ENCODE measurements at regions of chr19 and their contacts with region 1.

Region 1: DNA sequence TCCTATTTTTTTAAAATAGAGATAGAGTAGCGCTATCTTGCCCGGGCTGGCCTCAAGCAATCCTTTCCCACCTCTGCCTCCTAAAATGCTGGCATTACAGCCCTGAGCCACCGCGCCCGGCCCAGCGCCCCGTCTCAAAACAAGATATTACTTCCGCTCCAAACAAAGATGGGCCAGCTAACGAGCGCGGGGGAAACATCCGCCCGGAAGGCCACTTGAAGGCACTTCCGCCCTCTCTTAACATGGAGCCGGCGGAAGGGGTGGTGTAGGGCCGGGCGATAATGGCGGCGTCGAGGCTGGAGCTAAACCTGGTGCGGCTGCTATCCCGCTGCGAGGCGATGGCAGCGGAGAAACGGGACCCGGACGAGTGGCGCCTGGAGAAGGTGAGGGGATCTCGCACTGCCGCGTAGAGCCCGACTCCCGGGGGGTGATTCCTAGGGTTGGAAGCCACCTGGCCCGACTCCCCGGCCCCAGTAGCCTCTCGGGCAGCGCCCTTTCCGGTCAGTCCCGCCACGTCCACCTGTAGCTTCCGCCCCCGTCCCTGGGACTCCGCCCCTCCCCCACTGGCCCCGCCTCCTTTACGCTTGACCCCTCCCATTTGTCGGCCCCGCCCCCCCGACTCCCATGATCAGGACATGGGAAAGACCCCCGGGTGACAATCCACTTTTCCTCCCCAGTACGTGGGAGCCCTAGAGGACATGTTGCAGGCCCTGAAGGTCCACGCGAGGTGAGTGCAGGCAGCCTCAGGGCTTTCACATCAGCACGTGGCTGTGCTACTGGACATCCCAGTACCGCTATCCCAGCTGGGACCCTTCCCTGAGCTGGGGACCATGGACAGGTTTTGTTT is at the start of gene USE1:
- DNase-seq: peak; percentile 74
- H3K4me3 ChIP-seq: peak within 1 kb of the TSS; percentile 79
- H3K27ac ChIP-seq: peak within 1 kb of the TSS; percentile 93
- H3K27me3 ChIP-seq: no peaks in the 10 kb centered on the region
- CTCF ChIP-seq: no peak
- polyA plus RNA-seq, gene USE1: 21.1 and 25.1 TPM in 2 replicates

Region 2: GRCh38 chr19:17107525-17108452 is 107.6 kb before region 1 on chr19:
- CTCF ChIA-PET with region 1: no interaction called
- POLR2A ChIA-PET with region 1: no interaction called
- DNase-seq: peak; percentile 83
- H3K4me3 ChIP-seq: peak overlapping the region; percentile 15; the same call in 1 of the 2 replicates
- H3K27ac ChIP-seq: peak overlapping the region; percentile 90
- H3K27me3 ChIP-seq: no peaks in the 10 kb centered on the region
- CTCF ChIP-seq: no peak

Region 3: DNA sequence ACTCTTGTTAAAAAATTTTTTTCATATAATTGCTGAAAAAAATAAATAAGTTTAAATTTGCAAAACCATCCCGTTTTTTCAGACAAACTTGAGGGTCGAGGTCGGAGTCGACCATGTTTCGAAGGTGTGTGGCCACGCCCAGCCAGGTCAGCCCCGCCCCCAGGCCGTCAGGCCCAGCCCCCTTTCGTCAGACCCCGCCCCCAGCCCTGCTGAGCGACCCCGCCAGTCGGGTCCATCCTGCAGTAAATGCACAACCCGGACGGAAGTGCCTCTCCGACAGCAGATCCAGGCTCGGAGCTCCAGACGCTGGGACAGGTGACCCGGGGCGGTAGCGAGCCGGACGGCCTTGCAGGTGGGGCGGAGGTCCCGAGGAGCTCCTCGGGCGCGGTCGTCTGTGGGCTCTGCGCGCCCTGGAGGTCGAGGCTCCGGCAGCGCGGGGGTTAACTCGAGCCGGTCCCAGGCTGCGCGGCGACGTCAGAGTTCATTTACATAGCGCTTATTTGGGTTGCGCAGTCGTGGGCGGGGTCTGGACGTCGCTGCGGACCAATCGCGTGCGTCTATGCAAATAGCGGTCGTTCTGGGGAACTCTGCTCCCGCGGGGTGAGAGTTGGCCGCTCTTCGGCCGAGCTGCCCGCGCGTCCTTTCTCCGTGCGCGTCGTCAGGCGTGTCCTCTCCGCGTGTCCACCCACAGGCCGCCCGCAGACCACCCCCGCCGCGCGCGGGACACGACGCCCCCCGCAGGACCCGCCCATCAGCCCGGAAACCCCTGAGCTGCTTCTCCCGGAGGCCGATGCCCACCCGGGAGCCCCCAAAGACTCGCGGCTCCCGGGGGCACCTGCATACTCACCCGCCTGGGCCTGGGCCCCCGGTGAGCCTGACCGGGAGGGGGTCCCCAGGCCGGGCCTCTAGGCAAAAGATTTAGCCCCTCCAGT is 10.9 kb after region 1 on chr19 and contains the start of gene OCEL1:
- CTCF ChIA-PET with region 1: no interaction called
- POLR2A ChIA-PET with region 1: interaction called, 10 read pairs
- DNase-seq: peak; percentile 92
- H3K4me3 ChIP-seq: peak within 1 kb of the TSS; percentile 82
- H3K27ac ChIP-seq: peak within 1 kb of the TSS; percentile 47
- H3K27me3 ChIP-seq: no peaks in the 10 kb centered on the region
- CTCF ChIP-seq: no peak
- polyA plus RNA-seq, gene OCEL1: 4.6 and 6.7 TPM in 2 replicates

Region 4: DNA sequence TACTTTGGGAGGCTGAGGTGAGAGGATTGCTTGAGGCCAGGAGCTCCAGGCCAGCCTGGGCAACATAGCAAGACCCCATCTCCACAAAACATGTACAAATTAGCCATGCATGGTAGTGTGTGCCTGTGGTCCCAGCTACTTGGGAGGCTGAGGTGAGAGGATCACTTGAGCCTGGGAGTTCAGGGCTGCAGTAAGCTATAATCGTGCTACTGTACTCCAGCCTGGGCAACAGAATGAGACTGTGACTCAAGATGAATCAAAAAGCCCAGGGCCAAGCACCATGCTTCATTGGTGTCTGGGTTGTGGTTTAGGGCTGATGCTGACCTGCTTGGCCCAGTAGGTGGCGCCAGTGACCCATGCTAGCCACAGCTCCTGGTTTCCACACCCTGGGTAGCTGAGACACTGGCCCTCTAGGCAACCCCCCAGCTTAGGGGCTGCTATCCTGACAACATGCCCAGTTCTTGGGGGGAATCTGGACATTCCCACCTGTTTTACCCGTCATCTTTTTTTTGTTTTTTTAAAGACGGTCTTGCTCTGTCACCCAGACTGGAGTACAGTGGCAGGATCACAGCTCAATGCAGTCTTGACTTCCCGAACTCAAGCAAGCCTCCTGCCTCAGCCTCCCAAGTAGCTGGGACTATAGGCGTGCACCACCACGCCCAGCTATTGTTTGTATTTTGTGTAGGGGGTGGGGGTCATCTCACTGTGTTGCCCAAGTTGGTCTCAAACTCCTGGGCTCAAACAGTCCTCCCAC is 722.9 kb after region 1 on chr19:
- CTCF ChIA-PET with region 1: no interaction called
- POLR2A ChIA-PET with region 1: interaction called, 10 read pairs
- DNase-seq: peak; percentile 65
- H3K4me3 ChIP-seq: no peak overlapping the region
- H3K27ac ChIP-seq: no peak overlapping the region
- H3K27me3 ChIP-seq: no peaks in the 10 kb centered on the region
- CTCF ChIP-seq: peak; percentile 94